ENCODE measurements at regions of chr1 and their contacts with region 1.

Region 1: GRCh38 chr1:159214149-159214760 is 9.6 kb downstream of the ACKR1 start:
- DNase-seq: peak in 1 of 2 donors; percentile 22
- ATAC-seq: peak in 1 of 8 donors; percentile 69
- H3K4me3 ChIP-seq: no peak overlapping the region
- H3K27ac ChIP-seq: no peak overlapping the region
- H3K4me1 ChIP-seq: peaks cover 0 to 14% (median 8%) of the 10 kb centered on the region in 9 donors
- H3K27me3 ChIP-seq: peaks cover 0 to 65% (median 34%) of the 10 kb centered on the region in 7 donors
- CTCF ChIP-seq: peak; percentile 78 to 95 (median 89)

Region 2: GRCh38 chr1:159132271-159132881 is 81.9 kb before region 1 on chr1:
- intact Hi-C with region 1: loop called in 1 of 10 experiments (anchors 2 kb)
- DNase-seq: peak; percentile 36 to 61
- ATAC-seq: no peak
- H3K4me3 ChIP-seq: no peak overlapping the region
- H3K27ac ChIP-seq: no peak overlapping the region
- H3K4me1 ChIP-seq: no peaks in the 10 kb centered on the region
- H3K27me3 ChIP-seq: peaks cover 0 to 31% (median 6%) of the 10 kb centered on the region in 7 donors
- CTCF ChIP-seq: peak; percentile 52 to 91 (median 78)

Measured in heart right ventricle (tissue), 16 donors.